ENCODE measurements at regions of chr17 and their contacts with region 1.

Region 1: DNA sequence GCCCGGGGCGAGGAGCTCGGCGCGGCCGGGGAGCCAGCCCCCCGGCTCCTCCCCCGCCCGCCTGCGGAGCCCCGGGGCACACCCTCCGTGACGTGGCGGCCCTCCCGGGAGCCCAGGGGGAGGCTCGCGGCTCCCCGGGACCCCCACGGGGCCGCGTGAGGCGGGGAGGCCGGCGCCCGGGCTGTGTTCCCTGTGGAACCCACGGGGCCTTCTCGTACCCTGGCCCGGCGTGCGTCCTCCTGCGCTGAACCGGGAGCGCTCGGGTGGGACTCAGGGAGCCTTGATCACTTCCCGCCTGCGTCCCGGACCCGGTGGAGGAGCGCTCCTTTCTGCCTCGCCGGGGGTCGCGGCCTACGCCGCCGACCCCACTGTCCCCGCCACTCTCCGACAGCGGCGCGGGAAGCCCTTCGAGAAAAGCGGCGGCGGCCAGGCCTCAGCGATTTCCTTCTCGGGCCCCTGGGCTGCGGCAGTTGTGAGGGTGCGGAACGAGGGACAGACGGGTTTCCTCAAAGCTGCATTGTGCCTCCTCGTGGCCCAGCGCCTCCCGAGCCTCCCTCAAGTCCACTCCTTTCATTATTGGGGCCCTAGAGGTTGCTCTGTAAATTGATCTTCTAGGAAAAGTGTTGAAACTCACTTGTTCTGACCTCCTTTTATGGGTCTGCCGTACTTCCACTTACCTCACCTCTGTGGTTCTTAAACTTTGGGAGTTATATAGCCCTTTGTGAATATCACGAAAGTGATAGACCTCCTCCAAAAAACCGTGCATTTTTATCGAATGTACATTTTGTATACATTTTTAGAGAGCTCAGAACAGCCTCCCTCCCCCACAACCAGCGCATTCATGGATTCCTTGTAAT is 597 bp downstream of the LIG3 start:
- DNase-seq: peak in 7 of 9 donors; percentile 65 to 87 (median 74)
- ATAC-seq: peak; percentile 91
- H3K4me3 ChIP-seq: peak overlapping the region; percentile 68
- H3K4me3 Mint-ChIP-seq: peak overlapping the region; percentile 87 to 97 (median 94)
- H3K27ac ChIP-seq: peak overlapping the region; percentile 99
- H3K27ac Mint-ChIP-seq: peak overlapping the region; percentile 91 to 98 (median 97)
- H3K4me1 ChIP-seq: peaks cover 17 to 26% of the 10 kb centered on the region in 2 donors
- H3K4me1 Mint-ChIP-seq: peaks cover 36 to 57% (median 53%) of the 10 kb centered on the region in 7 donors
- H3K27me3 ChIP-seq: no peaks in the 10 kb centered on the region
- H3K27me3 Mint-ChIP-seq: no peaks in the 10 kb centered on the region

Region 2: GRCh38 chr17:34542700-34543336 is 438.1 kb before region 1 on chr17:
- CTCF ChIA-PET with region 1: interaction called, 4 read pairs
- POLR2A ChIA-PET with region 1: no interaction called
- intact Hi-C with region 1: loop called in 1 of 2 experiments (anchors 1 kb)
- DNase-seq: peak; percentile 18 to 58 (median 35)
- ATAC-seq: peak; percentile 62
- H3K4me3 ChIP-seq: no peak overlapping the region
- H3K4me3 Mint-ChIP-seq: no peak overlapping the region
- H3K27ac ChIP-seq: no peak overlapping the region
- H3K27ac Mint-ChIP-seq: no peak overlapping the region
- H3K4me1 ChIP-seq: no peaks in the 10 kb centered on the region
- H3K4me1 Mint-ChIP-seq: no peaks in the 10 kb centered on the region
- H3K27me3 ChIP-seq: no peaks in the 10 kb centered on the region
- H3K27me3 Mint-ChIP-seq: peaks cover 21 to 34% (median 30%) of the 10 kb centered on the region in 5 donors

Region 3: GRCh38 chr17:34637548-34638525 is 343.1 kb before region 1 on chr17:
- CTCF ChIA-PET with region 1: no interaction called
- POLR2A ChIA-PET with region 1: interaction called, 3 read pairs
- intact Hi-C with region 1: loop called in 1 of 2 experiments (anchors 1 kb)
- DNase-seq: peak; percentile 63 to 86 (median 80)
- ATAC-seq: peak; percentile 96
- H3K4me3 ChIP-seq: peak overlapping the region; percentile 68
- H3K4me3 Mint-ChIP-seq: peak overlapping the region; percentile 30 to 93 (median 89)
- H3K27ac ChIP-seq: peak overlapping the region; percentile 17
- H3K27ac Mint-ChIP-seq: peak overlapping the region in 6 of 9 donors; percentile 25 to 76 (median 56)
- H3K4me1 ChIP-seq: peaks cover 4 to 12% of the 10 kb centered on the region in 2 donors
- H3K4me1 Mint-ChIP-seq: peaks cover 0 to 19% (median 6%) of the 10 kb centered on the region in 7 donors
- H3K27me3 ChIP-seq: no peaks in the 10 kb centered on the region
- H3K27me3 Mint-ChIP-seq: peaks cover 0 to 35% (median 3%) of the 10 kb centered on the region in 5 donors

Region 4: DNA sequence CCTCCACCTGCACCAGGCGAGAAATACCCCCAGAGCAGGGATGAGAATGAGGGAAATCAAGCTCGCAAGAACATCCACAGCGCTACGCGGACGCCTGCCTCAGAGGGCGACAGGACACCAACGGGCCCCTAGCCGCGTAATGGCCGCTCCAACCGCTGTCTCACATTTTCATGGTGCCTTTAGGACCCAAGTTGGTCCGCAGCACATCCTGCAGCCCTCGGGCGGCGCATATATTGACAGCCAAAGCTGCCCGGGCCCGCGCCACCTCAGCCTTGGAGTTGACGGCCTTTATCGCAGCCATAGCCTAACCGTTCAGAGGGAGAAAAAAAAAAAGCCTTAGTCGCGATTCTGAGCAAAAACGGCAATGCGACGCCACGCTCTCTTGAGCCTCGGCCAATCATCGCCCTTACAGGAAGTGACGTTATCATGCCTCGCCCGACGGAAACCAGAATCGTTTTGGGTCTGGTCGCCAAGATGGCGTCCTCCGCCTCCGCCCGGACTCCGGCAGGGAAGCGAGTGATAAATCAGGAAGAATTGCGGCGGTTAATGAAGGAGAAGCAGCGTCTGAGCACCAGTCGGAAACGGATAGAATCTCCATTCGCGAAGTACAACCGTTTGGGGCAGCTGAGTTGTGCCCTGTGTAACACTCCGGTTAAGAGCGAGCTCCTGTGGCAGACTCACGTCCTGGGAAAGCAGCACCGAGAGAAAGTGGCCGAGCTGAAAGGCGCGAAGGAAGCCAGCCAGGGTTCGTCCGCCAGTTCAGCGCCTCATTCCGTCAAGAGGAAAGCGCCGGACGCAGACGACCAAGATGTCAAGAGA is 19.6 kb before region 1 on chr17 and contains the starts of genes CCT6B and ZNF830:
- CTCF ChIA-PET with region 1: interaction called, 4 read pairs
- POLR2A ChIA-PET with region 1: interaction called, 44 read pairs
- intact Hi-C with region 1: loop called (anchors 1 kb)
- DNase-seq: peak; percentile 69 to 94 (median 91)
- ATAC-seq: peak; percentile 95
- H3K4me3 ChIP-seq: peak within 1 kb of the TSS; percentile 94
- H3K4me3 Mint-ChIP-seq: peak within 1 kb of the TSS; percentile 97 to 100 (median 99)
- H3K27ac ChIP-seq: peak within 1 kb of the TSS; percentile 92
- H3K27ac Mint-ChIP-seq: peak within 1 kb of the TSS; percentile 98 to 100 (median 99)
- H3K4me1 ChIP-seq: peaks cover 14 to 16% of the 10 kb centered on the region in 2 donors
- H3K4me1 Mint-ChIP-seq: peaks cover 19 to 38% (median 33%) of the 10 kb centered on the region in 7 donors
- H3K27me3 ChIP-seq: no peaks in the 10 kb centered on the region
- H3K27me3 Mint-ChIP-seq: peaks cover 0 to 10% (median 5%) of the 10 kb centered on the region in 5 donors
- total RNA-seq, gene CCT6B: 1.6 to 3.8 (median 2.4) TPM
- total RNA-seq, gene ZNF830: 26.9 to 47.3 (median 44.9) TPM

Region 5: DNA sequence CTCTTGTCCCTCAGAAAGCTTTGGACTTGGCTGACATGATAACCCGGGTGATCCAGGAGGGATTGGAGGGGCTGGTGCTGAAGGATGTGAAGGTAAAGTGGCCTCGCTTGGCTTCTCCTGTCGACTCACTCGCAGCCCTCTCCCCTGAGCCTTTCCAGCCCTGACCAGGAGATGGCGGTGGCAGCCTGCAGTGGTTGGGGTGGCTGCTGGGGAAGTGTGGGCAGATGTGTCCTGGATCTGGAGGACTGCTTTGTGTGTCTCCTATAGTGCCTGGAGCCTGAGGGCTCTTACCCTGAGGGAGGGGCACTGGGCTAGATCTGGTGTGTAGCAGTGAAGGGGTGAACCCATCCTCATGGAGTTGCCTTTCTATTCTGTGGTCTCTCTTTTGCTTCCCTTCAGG is 17.3 kb after region 1 on chr17:
- CTCF ChIA-PET with region 1: interaction called, 5 read pairs
- POLR2A ChIA-PET with region 1: interaction called, 13 read pairs
- intact Hi-C with region 1: loop called in 1 of 2 experiments (anchors 1 kb)
- DNase-seq: peak; percentile 62 to 82 (median 76)
- ATAC-seq: peak; percentile 96
- H3K4me3 ChIP-seq: no peak overlapping the region
- H3K4me3 Mint-ChIP-seq: no peak overlapping the region
- H3K27ac ChIP-seq: no peak overlapping the region
- H3K27ac Mint-ChIP-seq: peak overlapping the region; percentile 60 to 89 (median 82)
- H3K4me1 ChIP-seq: no peaks in the 10 kb centered on the region
- H3K4me1 Mint-ChIP-seq: peaks cover 5 to 10% (median 6%) of the 10 kb centered on the region in 7 donors
- H3K27me3 ChIP-seq: no peaks in the 10 kb centered on the region
- H3K27me3 Mint-ChIP-seq: no peaks in the 10 kb centered on the region

Region 6: DNA sequence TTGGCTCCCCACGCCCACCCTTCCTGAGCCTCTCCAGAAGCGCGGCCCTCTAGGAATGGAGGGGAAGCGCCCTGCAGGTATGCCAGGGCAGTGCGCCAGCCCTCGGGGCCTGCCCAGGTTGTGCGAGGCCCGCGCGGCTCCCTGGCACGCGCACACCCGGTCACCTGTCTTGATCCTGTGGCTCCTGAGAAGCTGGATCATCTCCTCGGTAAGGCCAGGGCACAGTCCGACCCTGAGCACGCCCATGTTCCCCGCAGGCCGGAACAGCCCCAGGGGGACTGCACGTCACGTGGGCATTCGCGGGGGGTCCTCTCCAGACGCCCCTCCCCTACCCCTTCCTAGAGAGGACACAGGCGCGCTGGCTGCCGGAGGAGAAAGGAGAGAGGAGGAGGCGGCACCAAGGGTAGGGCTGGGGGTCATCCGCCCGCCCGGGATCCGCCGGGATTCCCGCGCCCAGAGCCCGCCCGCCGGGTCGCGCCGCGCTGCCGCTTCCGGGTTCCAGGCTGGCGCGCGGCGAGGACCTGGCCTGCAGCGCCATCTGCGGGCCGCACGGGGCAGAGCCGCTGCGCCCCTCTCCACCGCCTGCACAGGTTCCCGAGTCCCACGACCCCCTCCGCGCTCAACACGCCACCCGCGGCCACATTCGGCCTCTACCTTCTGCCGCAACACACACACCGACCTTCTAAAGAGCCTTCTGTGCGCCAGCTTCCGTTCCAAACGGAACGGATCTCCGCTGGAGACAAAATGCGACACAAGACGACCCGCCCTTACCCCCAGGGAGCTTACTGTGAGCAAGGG is 138.7 kb after region 1 on chr17 and contains the start of gene RAD51D:
- CTCF ChIA-PET with region 1: no interaction called
- POLR2A ChIA-PET with region 1: interaction called, 5 read pairs
- intact Hi-C with region 1: loop called (anchors 1 kb)
- DNase-seq: peak; percentile 71 to 90 (median 83)
- ATAC-seq: peak; percentile 96
- H3K4me3 ChIP-seq: peak within 1 kb of the TSS; percentile 82
- H3K4me3 Mint-ChIP-seq: peak within 1 kb of the TSS; percentile 87 to 97 (median 94)
- H3K27ac ChIP-seq: peak within 1 kb of the TSS; percentile 81
- H3K27ac Mint-ChIP-seq: peak within 1 kb of the TSS; percentile 88 to 96 (median 93)
- H3K4me1 ChIP-seq: peaks cover 14 to 15% of the 10 kb centered on the region in 2 donors
- H3K4me1 Mint-ChIP-seq: peaks cover 23 to 45% (median 33%) of the 10 kb centered on the region in 7 donors
- H3K27me3 ChIP-seq: no peaks in the 10 kb centered on the region
- H3K27me3 Mint-ChIP-seq: no peaks in the 10 kb centered on the region
- total RNA-seq, gene RAD51D: 15.0 to 34.2 (median 25.4) TPM

Measured in naive thymus-derived CD4-positive, alpha-beta T cell (primary cell).